A549 (cell line): ENCODE measurements at regions of chr7 and their contacts with region 1.

Region 1: DNA sequence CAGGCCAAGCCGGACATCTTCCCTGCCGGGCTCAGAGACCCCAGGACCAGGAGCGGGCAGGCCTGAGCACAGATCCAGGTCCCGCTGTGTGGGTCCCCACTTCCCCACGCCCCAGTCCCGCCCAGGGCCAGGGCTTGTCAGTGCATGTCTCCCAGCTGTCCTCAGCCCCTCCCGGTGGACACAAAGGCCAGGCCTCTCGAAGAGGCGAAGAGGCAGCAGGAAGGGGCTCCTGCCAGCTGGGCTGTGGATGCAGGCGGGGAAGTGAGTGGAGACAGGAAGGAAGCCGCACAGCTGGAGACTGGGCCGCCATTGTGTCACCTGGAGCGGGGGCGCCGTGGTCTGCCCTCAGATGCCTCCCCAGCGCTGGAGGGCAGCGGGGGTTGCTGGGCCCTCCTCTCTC is 4.8 kb downstream of the GRIFIN start:
- DNase-seq: no peak
- ATAC-seq: no peak; a peak in 1 of 6 replicates
- H3K4me3 ChIP-seq: no peak overlapping the region
- H3K27ac ChIP-seq: peak overlapping the region in 1 of 2 experiments; percentile 74; a peak in 3 of 6 replicates
- H3K4me1 ChIP-seq: peaks cover 9% of the 10 kb centered on the region
- CTCF ChIP-seq: no peak
- EP300 ChIP-seq: no peak
- POLR2A ChIP-seq: no peak
- RAD21 ChIP-seq: no peak

Region 2: GRCh38 chr7:2482725-2483451 is 11.5 kb after region 1 on chr7:
- CTCF ChIA-PET with region 1: interaction called, 45 read pairs
- POLR2A ChIA-PET with region 1: no interaction called
- DNase-seq: peak in 1 of 2 experiments; percentile 63
- ATAC-seq: no peak
- H3K4me3 ChIP-seq: no peak overlapping the region
- H3K27ac ChIP-seq: no peak overlapping the region
- H3K4me1 ChIP-seq: peaks cover 8% of the 10 kb centered on the region; the same call in 1 of the 3 replicates
- CTCF ChIP-seq: 0 out of 3 replicates have a peak, but pooled peaks have one; percentile 5
- EP300 ChIP-seq: no peak
- POLR2A ChIP-seq: no peak
- RAD21 ChIP-seq: no peak

Region 3: GRCh38 chr7:2497500-2498336 is 26.3 kb after region 1 on chr7:
- CTCF ChIA-PET with region 1: interaction called, 28 read pairs
- POLR2A ChIA-PET with region 1: no interaction called
- DNase-seq: no peak
- ATAC-seq: no peak
- H3K4me3 ChIP-seq: no peak overlapping the region
- H3K27ac ChIP-seq: no peak overlapping the region
- H3K4me1 ChIP-seq: no peaks in the 10 kb centered on the region
- CTCF ChIP-seq: no peak
- EP300 ChIP-seq: no peak
- POLR2A ChIP-seq: no peak
- RAD21 ChIP-seq: no peak

Region 4: GRCh38 chr7:2503056-2503941 is 31.9 kb after region 1 on chr7:
- CTCF ChIA-PET with region 1: interaction called, 28 read pairs
- POLR2A ChIA-PET with region 1: no interaction called
- DNase-seq: no peak
- ATAC-seq: no peak
- H3K4me3 ChIP-seq: no peak overlapping the region
- H3K27ac ChIP-seq: no peak overlapping the region
- H3K4me1 ChIP-seq: no peaks in the 10 kb centered on the region
- CTCF ChIP-seq: no peak
- EP300 ChIP-seq: no peak
- POLR2A ChIP-seq: no peak
- RAD21 ChIP-seq: no peak